ENCODE measurements at regions of chr2 and their contacts with region 1.

Region 1: DNA sequence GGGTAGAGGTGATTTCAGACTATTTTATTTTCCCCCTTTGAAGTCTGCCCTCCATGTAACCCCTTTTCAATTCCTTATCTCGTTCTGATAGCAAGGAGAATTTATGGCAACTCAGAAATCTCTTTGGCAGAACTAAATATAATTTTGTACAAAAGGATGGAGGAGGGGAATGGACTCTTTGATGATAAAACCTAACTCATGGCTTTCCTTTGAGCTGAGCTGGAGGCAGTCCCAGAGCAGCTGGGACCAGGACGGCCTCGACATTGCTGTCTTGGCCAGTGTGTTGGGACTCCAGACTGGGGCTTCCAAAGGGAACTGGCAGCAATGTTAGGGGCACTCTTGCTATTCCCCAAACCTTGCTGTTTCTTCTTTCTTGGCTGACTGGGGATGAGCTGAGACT is 47.7 kb downstream of the PAX8 start:
- DNase-seq: no peak
- ATAC-seq: no peak
- H3K4me3 ChIP-seq: no peak overlapping the region
- H3K27ac ChIP-seq: no peak overlapping the region
- H3K4me1 ChIP-seq: no peaks in the 10 kb centered on the region; the same call in 1 of the 2 replicates
- H3K27me3 ChIP-seq: no peaks in the 10 kb centered on the region
- CTCF ChIP-seq: no peak

Region 2: GRCh38 chr2:113390124-113390849 is 159.2 kb after region 1 on chr2:
- CTCF ChIA-PET with region 1: no interaction called
- POLR2A ChIA-PET with region 1: interaction called, 13 read pairs
- in situ Hi-C with region 1: no loop called
- intact Hi-C with region 1: no loop called
- DNase-seq: peak; percentile 81
- ATAC-seq: peak; percentile 81
- H3K4me3 ChIP-seq: no peak overlapping the region
- H3K27ac ChIP-seq: no peak overlapping the region
- H3K4me1 ChIP-seq: no peaks in the 10 kb centered on the region
- H3K27me3 ChIP-seq: no peaks in the 10 kb centered on the region
- CTCF ChIP-seq: peak; percentile 95